GM12878 (cell line): ENCODE measurements at regions of chr3 and their contacts with region 1.

Region 1: DNA sequence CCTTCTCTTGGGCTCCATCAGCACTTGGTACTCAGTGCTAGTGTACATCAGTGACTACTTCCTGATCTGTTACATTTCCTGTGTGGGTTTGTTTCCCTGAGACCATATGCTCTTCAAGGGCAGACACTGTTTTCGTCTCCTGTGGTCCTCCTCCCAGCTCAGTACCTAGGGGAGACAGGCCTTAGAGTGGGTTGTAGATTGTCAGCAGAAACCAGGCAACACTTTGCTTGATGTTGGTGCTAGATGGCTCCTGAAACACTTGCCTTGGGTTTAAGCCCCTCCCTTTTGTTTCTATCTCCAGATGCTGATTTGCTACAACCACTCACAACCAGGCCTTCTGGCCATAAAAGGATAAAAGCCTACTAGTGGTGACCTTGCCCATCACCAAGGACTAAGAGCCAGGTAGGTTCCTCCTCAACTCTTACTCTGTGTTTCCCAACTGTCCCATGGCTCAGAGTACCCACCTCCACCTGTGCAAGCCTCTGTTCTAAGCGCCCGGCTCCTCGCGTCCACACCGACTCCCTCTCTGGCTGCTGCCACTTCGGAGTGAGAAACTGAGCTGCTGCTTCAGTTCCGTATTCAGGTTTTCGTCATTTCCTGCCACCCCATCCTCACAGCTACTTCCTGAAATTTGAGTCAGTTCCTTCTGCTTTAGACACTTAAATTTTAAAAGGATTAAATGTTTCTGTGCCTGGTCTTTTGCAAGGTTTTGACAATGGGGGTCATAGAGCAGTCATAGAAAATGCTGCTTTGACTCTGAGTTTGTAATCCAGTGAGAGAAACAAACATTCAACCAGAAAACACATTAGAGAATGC is at the start of gene HCLS1:
- DNase-seq: peak; percentile 83
- ATAC-seq: peak; percentile 91
- H3K4me3 ChIP-seq: peak within 1 kb of the TSS; percentile 61
- H3K27ac ChIP-seq: peak within 1 kb of the TSS; percentile 97
- H3K4me1 ChIP-seq: peaks cover 26% of the 10 kb centered on the region
- H3K27me3 ChIP-seq: no peaks in the 10 kb centered on the region
- CTCF ChIP-seq: no peak
- EP300 ChIP-seq: 0 out of 4 replicates have a peak, but pooled peaks of 1 of the 2 experiments have one; percentile 25
- POLR2A ChIP-seq: peak; percentile 99
- RAD21 ChIP-seq: no peak
- polyA plus RNA-seq, gene HCLS1: 51.6 to 76.2 TPM

Region 2: GRCh38 chr3:121493431-121493830 is 167.1 kb before region 1 on chr3:
- CTCF ChIA-PET with region 1: no interaction called
- POLR2A ChIA-PET with region 1: no interaction called
- RAD21 ChIA-PET with region 1: no interaction called
- SMC1A ChIA-PET with region 1: no interaction called
- in situ Hi-C with region 1: no loop called
- intact Hi-C with region 1: no loop called
- DNase-seq: no peak
- ATAC-seq: no peak
- H3K4me3 ChIP-seq: no peak overlapping the region
- H3K27ac ChIP-seq: no peak overlapping the region
- H3K4me1 ChIP-seq: no peaks in the 10 kb centered on the region
- H3K27me3 ChIP-seq: no peaks in the 10 kb centered on the region
- CTCF ChIP-seq: no peak
- EP300 ChIP-seq: no peak
- POLR2A ChIP-seq: no peak
- RAD21 ChIP-seq: no peak

Region 3: DNA sequence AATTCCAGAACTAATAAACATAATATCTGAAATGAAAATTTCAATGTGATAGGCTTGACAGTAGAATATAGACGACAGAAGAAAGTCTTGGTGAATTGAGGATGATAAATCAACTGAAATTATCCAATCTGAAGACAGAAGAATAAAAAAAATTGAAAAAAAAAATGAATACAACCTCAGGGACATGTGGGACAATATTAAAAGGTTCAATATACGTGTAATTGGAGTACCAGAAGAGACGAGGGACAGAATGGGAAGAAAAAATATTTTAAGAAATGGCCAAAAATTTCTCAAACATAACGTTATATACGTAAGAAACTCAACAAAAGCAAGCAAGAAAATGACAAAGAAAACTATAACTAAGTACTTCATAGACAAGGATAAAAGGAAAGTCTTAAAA is 43.4 kb after region 1 on chr3:
- CTCF ChIA-PET with region 1: no interaction called
- POLR2A ChIA-PET with region 1: no interaction called
- RAD21 ChIA-PET with region 1: no interaction called
- SMC1A ChIA-PET with region 1: no interaction called
- in situ Hi-C with region 1: no loop called
- intact Hi-C with region 1: no loop called
- DNase-seq: no peak
- ATAC-seq: no peak
- H3K4me3 ChIP-seq: no peak overlapping the region
- H3K27ac ChIP-seq: no peak overlapping the region
- H3K4me1 ChIP-seq: no peaks in the 10 kb centered on the region
- H3K27me3 ChIP-seq: no peaks in the 10 kb centered on the region
- CTCF ChIP-seq: no peak
- EP300 ChIP-seq: no peak
- POLR2A ChIP-seq: no peak
- RAD21 ChIP-seq: no peak

Region 4: GRCh38 chr3:121749276-121750086 is 88.9 kb after region 1 on chr3 and contains the start of gene GOLGB1:
- CTCF ChIA-PET with region 1: no interaction called
- POLR2A ChIA-PET with region 1: interaction called, 7 read pairs
- RAD21 ChIA-PET with region 1: interaction called, 5 read pairs
- SMC1A ChIA-PET with region 1: interaction called, 3 read pairs
- in situ Hi-C with region 1: no loop called
- intact Hi-C with region 1: loop called (anchors 2 kb)
- DNase-seq: peak; percentile 100
- ATAC-seq: peak; percentile 96
- H3K4me3 ChIP-seq: peak within 1 kb of the TSS; percentile 91
- H3K27ac ChIP-seq: peak within 1 kb of the TSS; percentile 72
- H3K4me1 ChIP-seq: no peaks in the 10 kb centered on the region
- H3K27me3 ChIP-seq: no peaks in the 10 kb centered on the region; a peak in 1 of 4 replicates
- CTCF ChIP-seq: no peak
- EP300 ChIP-seq: no peak
- POLR2A ChIP-seq: peak; percentile 100
- RAD21 ChIP-seq: no peak
- polyA plus RNA-seq, gene GOLGB1: 7.4 to 9.6 TPM